ENCODE measurements at regions of chr15 and their contacts with region 1.

Region 1: GRCh38 chr15:45457641-45458433 is 64.7 kb downstream of the SLC30A4 start:
- DNase-seq: peak; percentile 90
- ATAC-seq: peak; percentile 57
- H3K4me3 Mint-ChIP-seq: peak overlapping the region; percentile 82
- H3K27ac Mint-ChIP-seq: peak overlapping the region; percentile 81
- H3K4me1 Mint-ChIP-seq: peaks cover 48% of the 10 kb centered on the region
- H3K27me3 Mint-ChIP-seq: no peaks in the 10 kb centered on the region

Region 2: DNA sequence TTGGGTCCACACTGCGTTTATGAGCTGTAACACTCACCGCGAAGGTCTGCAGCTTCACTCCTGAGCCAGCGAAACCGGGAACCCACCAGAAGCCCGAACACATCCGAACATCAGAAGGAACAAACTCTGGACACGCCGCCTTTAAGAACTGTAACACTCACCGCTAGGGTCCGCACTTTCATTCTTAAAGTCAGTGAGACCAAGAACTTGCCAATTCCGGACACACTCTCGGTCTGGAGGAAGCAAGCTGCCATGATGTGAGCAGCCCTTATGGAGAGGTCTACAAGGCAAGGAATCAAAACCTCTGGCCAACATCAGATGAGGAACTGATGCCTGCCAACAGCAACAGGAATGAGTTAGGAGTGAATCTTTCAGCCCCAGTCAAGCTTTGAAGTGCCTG is 142.9 kb before region 1 on chr15:
- CTCF ChIA-PET with region 1: no interaction called
- POLR2A ChIA-PET with region 1: no interaction called
- DNase-seq: peak; percentile 21
- ATAC-seq: no peak
- H3K4me3 Mint-ChIP-seq: no peak overlapping the region
- H3K27ac Mint-ChIP-seq: no peak overlapping the region
- H3K4me1 Mint-ChIP-seq: no peaks in the 10 kb centered on the region
- H3K27me3 Mint-ChIP-seq: peaks cover 14% of the 10 kb centered on the region

Region 3: DNA sequence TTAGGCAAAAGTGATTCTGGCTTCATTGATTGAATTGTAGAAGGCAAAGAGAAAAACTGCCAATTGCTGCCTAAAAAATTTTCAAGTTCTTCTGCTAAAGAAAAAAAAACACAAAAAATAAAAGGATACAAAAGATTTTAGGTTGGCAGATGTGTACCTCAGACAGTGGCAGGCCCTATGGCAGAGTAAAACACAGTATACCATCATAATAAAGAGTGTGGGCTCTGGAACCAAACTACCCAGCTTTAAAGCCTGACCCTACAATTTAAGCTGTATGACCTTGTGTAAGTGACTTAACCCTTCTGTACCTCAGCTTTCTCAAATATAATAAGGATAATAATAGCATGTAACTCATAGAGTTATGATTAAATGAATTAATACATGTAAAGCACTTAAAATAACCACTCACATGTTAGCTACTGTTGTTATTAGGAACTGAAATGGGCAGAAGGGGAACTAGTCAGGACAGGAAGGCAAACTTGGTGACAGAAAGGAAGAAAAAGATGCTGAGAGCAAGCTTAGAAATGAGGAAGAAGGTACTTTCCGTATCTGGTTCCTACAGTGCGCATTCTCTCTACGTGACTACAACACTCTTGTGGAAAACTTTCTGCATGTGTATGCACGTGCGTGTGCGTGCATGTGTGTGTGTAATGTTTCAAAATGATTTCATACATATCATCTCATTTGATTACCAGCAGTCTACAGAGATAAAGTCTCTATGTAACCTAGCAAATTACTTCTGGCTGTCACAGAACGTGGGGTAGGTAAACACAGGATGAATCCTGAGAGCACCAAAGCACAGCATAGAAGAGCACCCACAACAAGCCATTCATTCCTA is 65.9 kb before region 1 on chr15:
- CTCF ChIA-PET with region 1: interaction called, 13 read pairs
- POLR2A ChIA-PET with region 1: no interaction called
- DNase-seq: no peak
- ATAC-seq: peak; percentile 5
- H3K4me3 Mint-ChIP-seq: no peak overlapping the region
- H3K27ac Mint-ChIP-seq: no peak overlapping the region
- H3K4me1 Mint-ChIP-seq: no peaks in the 10 kb centered on the region
- H3K27me3 Mint-ChIP-seq: peaks cover 20% of the 10 kb centered on the region

Region 4: GRCh38 chr15:45414215-45414885 is 43.5 kb before region 1 on chr15:
- CTCF ChIA-PET with region 1: interaction called, 30 read pairs
- POLR2A ChIA-PET with region 1: no interaction called
- DNase-seq: no peak
- ATAC-seq: peak; percentile 44
- H3K4me3 Mint-ChIP-seq: no peak overlapping the region
- H3K27ac Mint-ChIP-seq: peak overlapping the region; percentile 57
- H3K4me1 Mint-ChIP-seq: peaks cover 17% of the 10 kb centered on the region
- H3K27me3 Mint-ChIP-seq: no peaks in the 10 kb centered on the region

Region 5: GRCh38 chr15:45439521-45440260 is 18.1 kb before region 1 on chr15:
- CTCF ChIA-PET with region 1: interaction called, 31 read pairs
- POLR2A ChIA-PET with region 1: no interaction called
- DNase-seq: no peak
- ATAC-seq: no peak
- H3K4me3 Mint-ChIP-seq: no peak overlapping the region
- H3K27ac Mint-ChIP-seq: no peak overlapping the region
- H3K4me1 Mint-ChIP-seq: no peaks in the 10 kb centered on the region
- H3K27me3 Mint-ChIP-seq: peaks cover 9% of the 10 kb centered on the region

Region 6: DNA sequence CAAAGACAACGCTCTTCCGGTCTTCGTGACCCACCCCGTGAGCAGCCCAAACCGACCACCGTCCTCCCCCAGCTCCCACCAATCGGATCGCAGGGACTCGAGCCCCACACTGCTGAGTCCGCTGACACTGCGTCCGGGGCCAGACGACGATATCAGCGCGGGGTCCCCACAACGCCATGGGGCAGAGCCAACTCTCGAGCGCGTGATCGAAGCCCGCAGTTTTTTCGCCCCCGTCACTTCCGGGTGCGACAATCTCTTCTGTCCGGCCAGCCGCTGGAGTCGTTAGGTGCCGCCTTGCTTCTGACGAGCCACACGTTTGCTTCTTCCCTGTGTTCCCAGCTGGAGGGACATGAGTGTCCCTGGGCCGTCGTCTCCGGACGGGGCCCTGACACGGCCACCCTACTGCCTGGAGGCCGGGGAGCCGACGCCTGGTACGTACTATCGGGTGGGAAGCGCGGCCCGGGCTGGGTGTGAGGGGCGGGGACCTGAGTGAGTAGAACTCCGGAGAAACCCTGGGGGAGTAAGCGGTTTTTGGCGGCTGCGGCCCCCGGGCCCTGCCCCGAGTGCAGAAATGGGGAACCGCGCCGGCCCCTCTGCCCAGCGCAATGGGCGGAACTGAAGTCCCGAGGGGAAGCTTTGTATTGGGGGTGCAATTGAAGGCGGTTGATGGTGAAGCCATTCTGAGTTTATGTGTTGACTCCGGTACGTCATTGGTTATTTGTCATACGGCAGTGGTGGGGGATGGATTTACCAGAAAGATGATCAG is 129.4 kb after region 1 on chr15 and contains the start of gene BLOC1S6:
- CTCF ChIA-PET with region 1: interaction called, 54 read pairs
- POLR2A ChIA-PET with region 1: interaction called, 4 read pairs
- DNase-seq: peak; percentile 92
- ATAC-seq: peak; percentile 91
- H3K4me3 Mint-ChIP-seq: peak within 1 kb of the TSS; percentile 99
- H3K27ac Mint-ChIP-seq: peak within 1 kb of the TSS; percentile 100
- H3K4me1 Mint-ChIP-seq: peaks cover 43% of the 10 kb centered on the region
- H3K27me3 Mint-ChIP-seq: no peaks in the 10 kb centered on the region
- total RNA-seq, gene BLOC1S6: 32.9 to 35.2 TPM

Region 7: DNA sequence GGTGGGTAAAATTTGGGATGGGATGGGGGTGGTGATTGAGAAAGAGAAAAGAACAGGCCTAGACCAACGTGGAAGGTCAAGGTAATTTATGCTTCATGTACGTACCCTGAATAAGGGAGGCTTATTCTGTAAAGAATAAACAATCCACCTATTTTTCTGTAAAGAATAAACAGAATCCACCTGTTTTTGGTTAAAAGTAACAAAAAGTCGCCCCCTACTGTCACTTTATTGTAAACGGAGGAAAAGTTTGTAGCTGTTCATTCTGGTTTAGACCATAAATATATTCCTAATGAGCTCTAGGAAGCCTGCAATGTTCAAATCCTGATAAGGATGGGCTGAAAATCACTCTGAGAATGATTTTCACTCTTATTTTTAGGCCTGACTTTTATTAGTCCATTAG is 153.5 kb after region 1 on chr15:
- CTCF ChIA-PET with region 1: interaction called, 130 read pairs
- POLR2A ChIA-PET with region 1: interaction called, 3 read pairs
- DNase-seq: peak; percentile 21
- ATAC-seq: no peak
- H3K4me3 Mint-ChIP-seq: no peak overlapping the region
- H3K27ac Mint-ChIP-seq: no peak overlapping the region
- H3K4me1 Mint-ChIP-seq: peaks cover 5% of the 10 kb centered on the region
- H3K27me3 Mint-ChIP-seq: no peaks in the 10 kb centered on the region

Region 8: DNA sequence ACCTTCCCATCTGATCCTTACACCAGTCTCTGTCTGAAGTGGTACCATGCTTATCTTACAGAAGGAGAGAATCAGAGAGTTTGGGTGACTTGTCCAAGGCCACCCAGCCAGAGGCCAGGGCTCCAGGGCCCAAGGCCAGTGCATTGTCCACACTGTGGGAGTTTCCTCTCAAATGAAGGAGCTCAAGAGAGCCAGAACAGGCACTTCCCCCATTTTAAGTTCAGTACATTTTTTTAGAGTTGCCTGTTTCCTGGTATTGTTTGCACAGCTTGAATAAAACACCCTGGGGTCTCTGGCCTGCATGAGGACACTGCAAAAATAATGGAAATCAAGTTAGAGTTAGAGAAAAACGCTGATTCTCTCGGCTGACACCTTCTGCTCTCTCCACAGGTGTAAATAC is 461.0 kb after region 1 on chr15:
- CTCF ChIA-PET with region 1: no interaction called
- POLR2A ChIA-PET with region 1: no interaction called
- DNase-seq: no peak
- ATAC-seq: no peak
- H3K4me3 Mint-ChIP-seq: no peak overlapping the region
- H3K27ac Mint-ChIP-seq: no peak overlapping the region
- H3K4me1 Mint-ChIP-seq: no peaks in the 10 kb centered on the region
- H3K27me3 Mint-ChIP-seq: no peaks in the 10 kb centered on the region